ENCODE measurements at regions of chr1 and their contacts with region 1.

Region 1: GRCh38 chr1:108828022-108828961 is 28.6 kb downstream of the AKNAD1 start:
- DNase-seq: peak; percentile 15
- ATAC-seq: peak; percentile 96
- H3K4me3 ChIP-seq: no peak overlapping the region
- H3K27ac ChIP-seq: no peak overlapping the region
- H3K4me1 ChIP-seq: no peaks in the 10 kb centered on the region
- H3K27me3 ChIP-seq: no peaks in the 10 kb centered on the region
- CTCF ChIP-seq: peak; percentile 67 to 78 (median 71)
- EP300 ChIP-seq: no peak
- POLR2A ChIP-seq: no peak
- RAD21 ChIP-seq: peak; percentile 67

Region 2: DNA sequence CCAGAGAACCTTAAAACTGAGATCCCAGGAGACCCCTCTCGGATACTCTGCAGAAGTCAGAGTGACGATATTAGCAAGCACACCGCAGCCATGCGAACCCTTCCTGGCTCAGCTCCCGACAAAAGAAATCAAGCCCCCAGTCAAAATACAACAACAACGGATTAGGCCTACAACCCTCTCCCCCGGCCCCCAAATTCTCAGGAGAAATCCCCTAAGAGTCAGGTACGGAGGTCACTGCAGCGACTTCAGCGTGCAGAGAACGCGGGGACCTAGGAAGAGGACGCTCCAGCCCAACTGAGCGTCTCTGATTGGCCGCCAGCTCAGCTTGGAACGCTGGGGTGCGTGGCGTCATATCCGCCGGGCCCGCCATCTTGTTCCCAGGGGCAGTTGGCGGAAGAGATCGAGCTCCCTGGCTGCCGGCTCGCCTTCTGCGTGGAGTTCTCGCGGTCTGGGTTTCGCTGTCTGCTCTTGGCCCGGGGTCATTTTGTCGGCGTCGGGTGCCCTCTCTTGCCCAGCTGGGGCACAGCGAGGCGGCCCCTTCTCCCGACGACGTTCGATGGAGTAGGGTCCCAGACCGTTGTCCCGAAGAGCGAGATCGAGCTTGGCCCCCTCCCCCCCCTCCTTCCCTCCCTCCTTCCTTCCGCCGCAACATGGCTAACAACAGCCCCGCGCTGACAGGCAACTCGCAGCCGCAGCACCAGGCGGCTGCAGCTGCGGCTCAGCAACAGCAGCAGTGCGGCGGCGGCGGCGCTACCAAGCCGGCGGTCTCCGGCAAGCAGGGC is 136.2 kb before region 1 on chr1 and contains the start of gene PRPF38B:
- CTCF ChIA-PET with region 1: interaction called, 14 read pairs
- POLR2A ChIA-PET with region 1: no interaction called
- RAD21 ChIA-PET with region 1: interaction called, 10 read pairs
- SMC1A ChIA-PET with region 1: interaction called, 3 read pairs
- in situ Hi-C with region 1: no loop called
- intact Hi-C with region 1: no loop called
- DNase-seq: peak; percentile 66
- ATAC-seq: peak; percentile 93
- H3K4me3 ChIP-seq: peak within 1 kb of the TSS; percentile 96
- H3K27ac ChIP-seq: peak within 1 kb of the TSS; percentile 88
- H3K4me1 ChIP-seq: no peaks in the 10 kb centered on the region
- H3K27me3 ChIP-seq: no peaks in the 10 kb centered on the region
- CTCF ChIP-seq: no peak
- EP300 ChIP-seq: no peak
- POLR2A ChIP-seq: peak; percentile 99
- RAD21 ChIP-seq: no peak
- polyA plus RNA-seq, gene PRPF38B: 32.9 to 37.9 TPM

Region 3: DNA sequence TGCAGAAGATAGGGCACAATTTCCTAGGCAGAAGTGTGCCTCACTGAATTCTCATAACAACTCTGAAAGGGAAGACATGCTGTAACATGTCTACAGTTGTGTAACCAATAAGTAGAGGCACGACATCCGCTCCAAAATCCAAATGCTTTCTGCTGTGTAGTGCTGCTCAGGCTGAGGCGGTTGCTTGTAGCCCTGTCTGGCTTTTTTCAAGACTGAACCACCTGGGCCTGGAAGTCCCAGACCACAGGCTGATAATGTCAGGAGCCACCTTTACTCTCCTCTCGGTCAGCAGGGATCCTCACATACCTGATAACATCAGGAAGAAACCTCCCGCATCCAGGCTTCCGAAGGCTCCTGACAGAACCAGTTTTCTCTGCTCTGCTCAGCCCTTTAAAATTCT is 17.7 kb after region 1 on chr1:
- CTCF ChIA-PET with region 1: interaction called, 25 read pairs
- POLR2A ChIA-PET with region 1: no interaction called
- RAD21 ChIA-PET with region 1: interaction called, 7 read pairs
- SMC1A ChIA-PET with region 1: interaction called, 3 read pairs
- in situ Hi-C with region 1: no loop called
- intact Hi-C with region 1: no loop called
- DNase-seq: no peak
- ATAC-seq: no peak
- H3K4me3 ChIP-seq: no peak overlapping the region
- H3K27ac ChIP-seq: no peak overlapping the region
- H3K4me1 ChIP-seq: no peaks in the 10 kb centered on the region
- H3K27me3 ChIP-seq: no peaks in the 10 kb centered on the region; a peak in 1 of 4 replicates
- CTCF ChIP-seq: no peak
- EP300 ChIP-seq: no peak
- POLR2A ChIP-seq: no peak
- RAD21 ChIP-seq: no peak

Region 4: GRCh38 chr1:108862698-108863477 is 34.6 kb after region 1 on chr1:
- CTCF ChIA-PET with region 1: interaction called, 20 read pairs
- POLR2A ChIA-PET with region 1: no interaction called
- RAD21 ChIA-PET with region 1: no interaction called
- SMC1A ChIA-PET with region 1: interaction called, 3 read pairs
- in situ Hi-C with region 1: no loop called
- intact Hi-C with region 1: no loop called
- DNase-seq: no peak
- ATAC-seq: peak; percentile 92
- H3K4me3 ChIP-seq: no peak overlapping the region
- H3K27ac ChIP-seq: no peak overlapping the region
- H3K4me1 ChIP-seq: peaks cover 5% of the 10 kb centered on the region; the same call in 1 of the 2 replicates
- H3K27me3 ChIP-seq: no peaks in the 10 kb centered on the region; a peak in 1 of 4 replicates
- CTCF ChIP-seq: no peak
- EP300 ChIP-seq: no peak
- POLR2A ChIP-seq: no peak
- RAD21 ChIP-seq: no peak

Region 5: DNA sequence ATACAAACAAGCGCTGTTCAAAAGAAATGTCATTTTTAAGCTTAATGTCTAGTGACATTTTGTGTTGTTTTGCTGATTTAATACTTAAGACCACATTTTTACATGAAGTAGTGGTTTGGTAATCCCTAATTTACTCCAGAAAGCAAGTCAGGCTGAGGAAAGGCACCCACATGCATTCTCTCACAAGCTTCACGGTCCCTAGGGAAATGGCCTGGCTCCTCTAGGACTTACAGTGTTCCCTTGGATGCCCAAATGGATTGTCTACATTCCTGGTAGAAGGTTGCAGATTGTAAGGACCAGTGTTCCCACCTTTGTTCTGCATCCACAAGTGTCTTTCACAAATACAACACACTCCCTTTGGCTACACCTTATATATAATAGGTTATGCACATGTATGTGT is 58.0 kb after region 1 on chr1:
- CTCF ChIA-PET with region 1: interaction called, 35 read pairs
- POLR2A ChIA-PET with region 1: interaction called, 3 read pairs
- RAD21 ChIA-PET with region 1: interaction called, 5 read pairs
- SMC1A ChIA-PET with region 1: interaction called, 12 read pairs
- in situ Hi-C with region 1: loop called (anchors 10 kb)
- intact Hi-C with region 1: no loop called
- DNase-seq: no peak
- ATAC-seq: no peak
- H3K4me3 ChIP-seq: no peak overlapping the region
- H3K27ac ChIP-seq: no peak overlapping the region
- H3K4me1 ChIP-seq: no peaks in the 10 kb centered on the region
- H3K27me3 ChIP-seq: no peaks in the 10 kb centered on the region
- CTCF ChIP-seq: no peak
- EP300 ChIP-seq: no peak
- POLR2A ChIP-seq: no peak
- RAD21 ChIP-seq: no peak

Region 6: DNA sequence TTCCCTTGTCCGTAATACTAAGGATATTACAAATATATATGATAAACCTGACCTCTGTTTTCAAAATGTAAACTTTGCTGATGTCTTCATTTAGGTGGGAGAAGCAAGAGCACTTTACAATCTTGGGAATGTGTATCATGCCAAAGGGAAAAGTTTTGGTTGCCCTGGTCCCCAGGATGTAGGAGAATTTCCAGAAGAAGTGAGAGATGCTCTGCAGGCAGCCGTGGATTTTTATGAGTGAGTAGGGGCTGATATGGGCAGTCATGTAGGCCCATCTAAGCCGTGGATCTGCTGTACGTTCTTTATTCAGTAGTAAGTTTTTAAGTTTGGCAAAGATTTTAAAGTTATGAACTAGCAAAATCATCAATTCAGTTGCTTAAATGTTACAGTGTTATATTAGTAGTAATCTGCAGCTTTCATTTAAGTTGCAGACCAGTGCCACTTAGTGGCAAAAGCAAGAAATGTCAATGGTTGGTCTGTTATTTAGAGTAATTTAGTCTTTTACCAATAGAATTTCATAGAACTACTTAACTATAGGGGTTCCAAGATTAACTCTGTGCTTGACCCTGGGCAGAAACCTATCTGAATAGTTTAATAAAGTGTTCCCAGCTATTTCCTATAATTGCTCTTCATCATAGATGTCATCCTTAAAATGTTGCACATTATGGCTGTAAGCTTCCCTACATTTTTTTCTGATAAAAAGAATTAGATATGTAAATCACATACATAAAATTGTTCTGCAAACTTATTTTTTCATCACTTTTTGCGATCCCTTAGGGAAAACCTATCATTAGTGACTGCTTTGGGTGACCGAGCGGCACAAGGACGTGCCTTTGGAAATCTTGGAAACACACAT is 69.8 kb after region 1 on chr1:
- CTCF ChIA-PET with region 1: interaction called, 323 read pairs
- POLR2A ChIA-PET with region 1: interaction called, 3 read pairs
- RAD21 ChIA-PET with region 1: interaction called, 92 read pairs
- SMC1A ChIA-PET with region 1: interaction called, 118 read pairs
- in situ Hi-C with region 1: loop called (anchors 10 kb)
- intact Hi-C with region 1: loop called (anchors 1 kb)
- DNase-seq: no peak
- ATAC-seq: peak; percentile 82
- H3K4me3 ChIP-seq: no peak overlapping the region
- H3K27ac ChIP-seq: no peak overlapping the region
- H3K4me1 ChIP-seq: no peaks in the 10 kb centered on the region
- H3K27me3 ChIP-seq: no peaks in the 10 kb centered on the region
- CTCF ChIP-seq: peak; percentile 55 to 80 (median 64)
- EP300 ChIP-seq: no peak
- POLR2A ChIP-seq: no peak
- RAD21 ChIP-seq: peak; percentile 86

Region 7: GRCh38 chr1:108955111-108955510 is 126.8 kb after region 1 on chr1:
- CTCF ChIA-PET with region 1: no interaction called
- POLR2A ChIA-PET with region 1: no interaction called
- RAD21 ChIA-PET with region 1: no interaction called
- SMC1A ChIA-PET with region 1: no interaction called
- in situ Hi-C with region 1: no loop called
- intact Hi-C with region 1: no loop called
- DNase-seq: no peak
- ATAC-seq: no peak
- H3K4me3 ChIP-seq: no peak overlapping the region
- H3K27ac ChIP-seq: no peak overlapping the region
- H3K4me1 ChIP-seq: peaks cover 5% of the 10 kb centered on the region; the same call in 1 of the 2 replicates
- H3K27me3 ChIP-seq: no peaks in the 10 kb centered on the region
- CTCF ChIP-seq: no peak
- EP300 ChIP-seq: no peak
- POLR2A ChIP-seq: no peak
- RAD21 ChIP-seq: no peak

Measured in GM12878 (cell line).